GM12878 (cell line): ENCODE measurements at regions of chr2 and their contacts with region 1.

Region 1: DNA sequence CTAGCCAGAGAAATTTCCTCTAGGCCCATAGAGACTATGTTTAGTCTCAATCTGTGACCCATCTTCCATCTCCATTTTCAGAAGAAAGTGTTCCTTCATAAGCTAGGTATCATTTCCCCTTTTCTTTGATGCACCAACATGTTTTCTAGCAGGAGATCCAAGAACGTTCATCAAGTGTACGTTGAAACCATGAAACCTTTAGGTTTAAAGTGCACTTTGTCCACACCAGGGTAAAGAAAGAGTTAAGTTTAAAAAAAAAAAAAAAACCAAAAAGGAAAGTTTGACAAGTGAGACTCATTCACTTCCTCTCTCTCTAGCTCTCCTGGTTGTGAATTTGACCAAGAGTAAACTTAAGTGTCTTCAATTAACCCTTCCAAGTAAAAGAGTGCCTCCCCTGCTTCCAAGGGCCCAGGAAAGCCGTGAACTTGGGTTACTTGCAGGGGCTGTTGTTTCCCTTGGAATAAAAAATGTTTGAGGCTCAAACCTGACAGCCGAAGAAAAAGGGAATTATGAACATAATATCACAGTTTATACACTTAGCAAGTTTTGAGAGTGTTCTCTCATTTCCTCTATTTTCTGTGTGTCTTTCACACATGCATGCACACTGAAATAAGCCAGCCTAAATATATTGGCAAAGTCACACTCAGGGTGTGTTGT is 56.7 kb downstream of the LBH start:
- DNase-seq: peak; percentile 55
- ATAC-seq: peak; percentile 89
- H3K4me3 ChIP-seq: peak overlapping the region; percentile 40; the same call in 1 of the 2 replicates
- H3K27ac ChIP-seq: peak overlapping the region; percentile 85
- H3K4me1 ChIP-seq: peaks cover 26% of the 10 kb centered on the region
- H3K27me3 ChIP-seq: no peaks in the 10 kb centered on the region
- CTCF ChIP-seq: no peak
- EP300 ChIP-seq: peak; percentile 21 to 43; a peak in 1 of 4 replicates
- POLR2A ChIP-seq: no peak
- RAD21 ChIP-seq: no peak

Region 2: DNA sequence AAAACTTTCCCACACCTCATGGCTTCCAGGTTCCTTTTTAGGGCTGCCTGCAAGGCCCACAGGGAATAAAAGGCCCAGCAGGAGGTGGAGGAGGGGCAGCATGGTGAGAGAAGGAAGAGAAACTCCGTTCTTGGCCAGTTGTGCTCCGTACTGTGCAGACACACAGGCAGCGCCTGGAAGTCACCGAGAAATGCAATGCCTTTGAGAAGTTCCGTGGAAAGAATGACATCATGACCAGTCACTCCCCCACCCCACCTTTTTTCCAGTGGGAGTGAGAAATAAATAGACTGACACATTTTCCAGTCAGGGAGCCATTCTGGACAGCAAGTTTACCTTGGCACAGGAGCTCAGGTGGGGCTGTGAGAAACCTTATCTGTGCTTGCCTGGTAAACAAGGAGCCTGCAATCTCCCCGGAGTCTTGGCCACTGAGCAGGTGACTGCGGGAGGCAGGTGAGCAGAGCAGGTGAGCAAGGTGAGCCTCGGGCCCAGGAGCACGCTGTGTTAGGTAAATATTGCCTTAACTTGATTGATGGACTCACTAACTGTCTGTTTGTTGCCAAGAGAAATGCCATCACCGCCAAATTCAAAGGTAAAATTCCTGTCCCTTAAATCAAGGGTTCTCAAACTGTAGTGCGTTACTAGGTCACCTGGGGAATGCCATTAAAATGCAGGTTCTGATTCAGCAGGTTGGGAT is 70.2 kb before region 1 on chr2:
- CTCF ChIA-PET with region 1: interaction called, 4 read pairs
- POLR2A ChIA-PET with region 1: no interaction called
- RAD21 ChIA-PET with region 1: interaction called, 10 read pairs
- SMC1A ChIA-PET with region 1: interaction called, 4 read pairs
- in situ Hi-C with region 1: no loop called
- intact Hi-C with region 1: no loop called
- DNase-seq: peak; percentile 48
- ATAC-seq: peak; percentile 87
- H3K4me3 ChIP-seq: no peak overlapping the region
- H3K27ac ChIP-seq: no peak overlapping the region
- H3K4me1 ChIP-seq: peaks cover 10% of the 10 kb centered on the region
- H3K27me3 ChIP-seq: no peaks in the 10 kb centered on the region
- CTCF ChIP-seq: no peak
- EP300 ChIP-seq: no peak
- POLR2A ChIP-seq: no peak
- RAD21 ChIP-seq: no peak

Region 3: DNA sequence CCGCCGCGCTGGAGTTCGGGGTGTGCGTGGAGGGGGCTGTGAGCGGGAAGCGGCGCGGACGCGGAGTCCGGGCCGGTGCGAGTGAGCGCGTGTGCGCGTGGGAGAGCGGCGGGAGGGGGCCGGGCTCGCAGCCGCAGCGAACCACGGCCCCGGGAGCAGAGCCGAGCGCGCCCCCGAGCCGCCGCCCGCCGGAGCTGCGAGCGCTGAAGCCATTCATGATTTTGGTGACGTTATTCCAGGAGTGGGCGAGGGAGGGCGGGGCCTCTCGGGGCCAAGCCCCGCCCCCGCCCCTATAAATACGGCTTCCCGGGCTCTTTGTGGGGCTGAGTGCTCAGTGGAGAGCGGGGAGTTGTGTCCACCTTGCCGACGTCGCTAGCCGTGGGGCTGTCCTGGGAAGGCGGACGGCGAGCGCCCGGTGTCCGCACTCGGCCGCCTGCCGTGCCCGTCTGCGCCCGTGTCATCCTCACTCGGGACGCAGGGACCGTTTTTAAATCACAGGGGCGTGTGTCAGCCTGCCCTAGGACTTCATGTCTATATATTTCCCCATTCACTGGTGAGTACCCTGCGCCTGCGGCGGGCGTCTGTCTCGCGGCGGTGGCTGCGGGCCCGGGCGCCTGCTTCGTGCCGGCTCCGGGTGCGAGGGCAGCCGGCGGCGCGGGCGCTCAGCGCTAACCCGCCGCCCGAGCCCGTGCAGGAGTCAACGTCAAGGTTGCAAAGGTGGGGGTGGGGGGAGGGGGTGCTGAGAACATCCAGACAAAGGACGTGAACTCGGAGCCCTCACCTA is 56.6 kb before region 1 on chr2 and contains the start of gene LBH:
- CTCF ChIA-PET with region 1: interaction called, 13 read pairs
- POLR2A ChIA-PET with region 1: interaction called, 13 read pairs
- RAD21 ChIA-PET with region 1: interaction called, 37 read pairs
- SMC1A ChIA-PET with region 1: interaction called, 46 read pairs
- in situ Hi-C with region 1: no loop called
- intact Hi-C with region 1: loop called (anchors 2 kb)
- DNase-seq: peak; percentile 56
- ATAC-seq: peak; percentile 59
- H3K4me3 ChIP-seq: peak within 1 kb of the TSS; percentile 80
- H3K27ac ChIP-seq: peak within 1 kb of the TSS; percentile 58
- H3K4me1 ChIP-seq: peaks cover 47% of the 10 kb centered on the region
- H3K27me3 ChIP-seq: no peaks in the 10 kb centered on the region
- CTCF ChIP-seq: peak in 1 of 3 experiments; percentile 31; a peak in 1 of 6 replicates
- EP300 ChIP-seq: peak in 1 of 2 experiments; percentile 27; a peak in 1 of 4 replicates
- POLR2A ChIP-seq: peak; percentile 99
- RAD21 ChIP-seq: peak; percentile 24; the same call in 1 of the 2 replicates
- polyA plus RNA-seq, gene LBH: 9.3 to 26.5 TPM

Region 4: DNA sequence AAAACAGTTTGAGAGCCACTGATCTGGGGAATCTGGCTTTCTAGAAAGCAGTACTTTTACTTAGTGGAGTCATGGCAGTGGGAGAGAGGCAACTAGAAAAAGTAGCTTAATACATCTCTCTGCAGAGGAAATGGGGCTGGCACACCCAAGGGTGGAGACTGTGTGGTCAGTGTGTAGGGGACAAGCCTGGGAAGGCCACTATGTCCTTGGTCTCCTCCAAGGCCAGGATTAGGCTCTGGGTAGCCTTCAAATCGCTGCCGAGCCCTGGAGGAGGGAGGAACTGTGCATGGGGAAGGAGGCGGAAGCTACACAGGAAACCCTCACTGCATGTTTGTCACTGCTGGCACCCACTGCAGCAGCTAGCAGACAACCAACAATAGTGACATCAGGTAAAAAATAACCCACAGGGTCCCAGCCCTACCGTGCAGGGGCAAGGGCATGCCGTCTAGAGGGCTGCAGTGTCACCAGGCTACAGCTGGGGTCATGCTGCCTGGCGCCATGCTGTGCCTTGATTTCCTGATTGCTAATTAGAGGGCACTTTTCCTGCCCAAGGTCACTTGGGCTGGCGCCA is 21.8 kb before region 1 on chr2:
- CTCF ChIA-PET with region 1: interaction called, 4 read pairs
- POLR2A ChIA-PET with region 1: interaction called, 5 read pairs
- RAD21 ChIA-PET with region 1: interaction called, 50 read pairs
- SMC1A ChIA-PET with region 1: interaction called, 24 read pairs
- in situ Hi-C with region 1: no loop called
- intact Hi-C with region 1: no loop called
- DNase-seq: no peak
- ATAC-seq: peak; percentile 78
- H3K4me3 ChIP-seq: no peak overlapping the region
- H3K27ac ChIP-seq: no peak overlapping the region
- H3K4me1 ChIP-seq: peaks cover 6% of the 10 kb centered on the region
- H3K27me3 ChIP-seq: no peaks in the 10 kb centered on the region
- CTCF ChIP-seq: no peak
- EP300 ChIP-seq: no peak
- POLR2A ChIP-seq: no peak
- RAD21 ChIP-seq: no peak

Region 5: GRCh38 chr2:30310955-30311354 is 23.0 kb after region 1 on chr2:
- CTCF ChIA-PET with region 1: interaction called, 4 read pairs
- POLR2A ChIA-PET with region 1: interaction called, 3 read pairs
- RAD21 ChIA-PET with region 1: interaction called, 4 read pairs
- SMC1A ChIA-PET with region 1: interaction called, 18 read pairs
- in situ Hi-C with region 1: no loop called
- intact Hi-C with region 1: no loop called
- DNase-seq: no peak
- ATAC-seq: peak; percentile 62
- H3K4me3 ChIP-seq: no peak overlapping the region
- H3K27ac ChIP-seq: 0 out of 2 replicates have a peak overlapping the region, but pooled peaks have one; percentile 13
- H3K4me1 ChIP-seq: peaks cover 20% of the 10 kb centered on the region
- H3K27me3 ChIP-seq: no peaks in the 10 kb centered on the region
- CTCF ChIP-seq: no peak
- EP300 ChIP-seq: no peak
- POLR2A ChIP-seq: no peak
- RAD21 ChIP-seq: no peak

Region 6: GRCh38 chr2:30398084-30398873 is 110.3 kb after region 1 on chr2:
- CTCF ChIA-PET with region 1: no interaction called
- POLR2A ChIA-PET with region 1: no interaction called
- RAD21 ChIA-PET with region 1: no interaction called
- SMC1A ChIA-PET with region 1: no interaction called
- in situ Hi-C with region 1: no loop called
- intact Hi-C with region 1: no loop called
- DNase-seq: no peak
- ATAC-seq: no peak
- H3K4me3 ChIP-seq: no peak overlapping the region
- H3K27ac ChIP-seq: no peak overlapping the region
- H3K4me1 ChIP-seq: no peaks in the 10 kb centered on the region
- H3K27me3 ChIP-seq: no peaks in the 10 kb centered on the region; a peak in 1 of 4 replicates
- CTCF ChIP-seq: no peak
- EP300 ChIP-seq: no peak
- POLR2A ChIP-seq: no peak
- RAD21 ChIP-seq: no peak

Region 7: DNA sequence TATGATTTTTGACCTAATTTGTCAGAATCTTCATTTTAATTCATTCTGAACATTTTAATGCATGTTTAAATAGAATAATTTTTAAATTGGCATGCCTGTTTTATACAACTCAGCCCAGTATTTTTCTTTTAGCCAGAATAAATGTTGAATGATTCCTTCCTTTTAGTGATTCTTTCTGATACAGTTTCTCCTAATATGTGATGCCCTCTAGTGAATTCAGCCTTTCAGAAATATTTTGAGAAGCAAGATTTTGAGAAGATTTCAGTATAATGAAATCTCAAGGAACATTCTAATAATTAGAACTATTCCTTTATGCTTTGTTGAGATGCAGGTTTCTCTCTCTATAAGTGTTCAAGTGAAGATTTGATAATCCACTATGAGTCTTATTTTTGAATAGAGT is 187.6 kb after region 1 on chr2:
- CTCF ChIA-PET with region 1: interaction called, 13 read pairs
- POLR2A ChIA-PET with region 1: interaction called, 3 read pairs
- RAD21 ChIA-PET with region 1: interaction called, 5 read pairs
- SMC1A ChIA-PET with region 1: interaction called, 6 read pairs
- in situ Hi-C with region 1: no loop called
- intact Hi-C with region 1: no loop called
- DNase-seq: no peak
- ATAC-seq: no peak
- H3K4me3 ChIP-seq: no peak overlapping the region
- H3K27ac ChIP-seq: no peak overlapping the region
- H3K4me1 ChIP-seq: peaks cover 3% of the 10 kb centered on the region; the same call in 1 of the 2 replicates
- H3K27me3 ChIP-seq: no peaks in the 10 kb centered on the region
- CTCF ChIP-seq: no peak; a peak in 1 of 6 replicates
- EP300 ChIP-seq: no peak
- POLR2A ChIP-seq: no peak
- RAD21 ChIP-seq: peak; percentile 35